Activated B cell treated with CpG ODN at 0.5 μM for 24 hours (primary cell): ENCODE measurements at regions of chr3 and their contacts with region 1.

Region 1: DNA sequence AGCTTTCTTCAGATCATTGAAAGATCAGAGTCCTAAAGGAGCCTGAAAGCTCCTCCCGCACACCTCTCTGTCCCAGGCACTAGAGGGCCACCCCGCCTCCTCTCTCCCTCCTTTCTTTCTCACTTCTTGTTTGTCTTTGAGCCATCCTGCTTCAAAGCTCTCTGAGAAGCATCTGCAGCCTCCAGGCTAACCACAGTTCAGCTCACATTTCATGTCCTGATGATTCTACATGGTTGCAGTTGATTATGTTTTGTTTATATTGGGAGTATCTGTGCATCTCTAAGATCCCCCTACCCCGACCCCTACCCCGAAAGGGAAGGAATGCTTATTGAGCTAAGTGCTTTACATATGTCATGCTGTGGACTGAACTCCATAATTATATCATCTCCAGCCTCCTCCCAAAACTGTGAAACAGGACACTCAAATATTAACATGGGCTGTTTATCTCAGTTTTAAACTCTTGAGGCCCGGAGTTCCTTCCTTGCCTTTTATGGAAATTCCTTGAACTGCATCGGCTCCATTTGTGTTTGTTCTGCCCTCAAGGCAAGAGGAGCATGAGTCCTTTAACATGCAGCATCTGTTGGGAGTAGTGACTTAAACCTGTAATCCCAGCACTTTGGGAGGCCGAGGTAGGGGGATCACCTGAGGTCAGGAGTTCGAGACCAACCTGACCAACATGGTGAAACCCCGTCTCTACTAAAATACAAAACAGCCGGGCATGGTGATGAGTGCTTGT is 30.9 kb downstream of the MGLL start:
- DNase-seq: no peak
- ATAC-seq: peak; percentile 83
- H3K4me3 Mint-ChIP-seq: no peak overlapping the region
- H3K27ac Mint-ChIP-seq: no peak overlapping the region
- H3K4me1 Mint-ChIP-seq: peaks cover 9% of the 10 kb centered on the region
- H3K27me3 Mint-ChIP-seq: no peaks in the 10 kb centered on the region
- CTCF ChIP-seq: no peak

Region 2: DNA sequence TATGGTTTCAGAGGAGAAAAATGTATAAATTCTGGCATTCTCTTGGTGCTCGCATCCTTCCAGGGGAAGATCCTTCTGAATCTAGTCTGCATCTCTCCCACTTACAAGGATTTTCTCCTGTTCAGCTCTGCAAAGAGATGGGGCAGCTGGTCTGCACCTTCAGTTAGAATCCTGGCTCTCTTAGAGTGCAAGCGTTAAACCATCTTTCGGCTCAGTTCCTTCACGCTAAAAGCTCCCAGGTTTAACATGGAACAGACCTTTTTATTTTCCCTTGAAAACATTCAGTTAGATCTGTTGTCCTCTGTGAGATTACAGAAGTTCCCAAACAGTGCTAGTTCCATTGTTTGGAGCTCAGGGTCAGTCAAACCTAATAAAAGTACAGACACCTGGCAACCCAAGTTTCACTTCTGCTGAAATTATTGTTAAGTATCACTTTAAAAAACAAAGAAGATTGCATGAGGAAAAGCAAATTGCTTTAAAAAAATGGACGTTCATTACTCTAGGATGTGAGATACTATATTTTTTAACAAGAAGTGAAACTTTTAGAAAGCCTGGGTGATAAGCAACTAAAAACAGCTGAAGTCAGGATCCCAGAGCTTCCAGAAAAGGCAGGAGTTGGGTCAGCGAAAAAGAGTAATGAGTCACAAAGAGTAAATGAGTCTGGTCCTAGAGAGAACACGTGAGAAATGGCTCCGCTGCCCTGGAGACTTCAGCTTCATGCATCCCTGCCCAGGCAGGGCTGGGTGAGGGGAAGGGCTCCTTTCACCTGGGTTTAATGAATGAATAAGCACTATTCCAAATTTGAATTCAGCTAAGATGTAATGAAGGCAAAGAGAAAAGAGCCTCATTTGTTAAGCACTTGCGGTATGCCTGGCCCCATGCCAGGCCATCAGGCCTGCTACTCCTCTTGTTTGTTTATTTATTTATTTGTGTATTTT is 55.3 kb before region 1 on chr3:
- CTCF ChIA-PET with region 1: no interaction called
- POLR2A ChIA-PET with region 1: no interaction called
- intact Hi-C with region 1: loop called (anchors 5 kb)
- DNase-seq: no peak
- ATAC-seq: peak; percentile 91
- H3K4me3 Mint-ChIP-seq: peak overlapping the region; percentile 77
- H3K27ac Mint-ChIP-seq: peak overlapping the region; percentile 93
- H3K4me1 Mint-ChIP-seq: peaks cover 46% of the 10 kb centered on the region
- H3K27me3 Mint-ChIP-seq: no peaks in the 10 kb centered on the region
- CTCF ChIP-seq: no peak

Region 3: GRCh38 chr3:127822698-127823425 is 31.5 kb after region 1 on chr3:
- CTCF ChIA-PET with region 1: interaction called, 5 read pairs
- POLR2A ChIA-PET with region 1: no interaction called
- intact Hi-C with region 1: loop called (anchors 5 kb)
- DNase-seq: peak; percentile 39
- ATAC-seq: peak; percentile 72
- H3K4me3 Mint-ChIP-seq: peak overlapping the region; percentile 93
- H3K27ac Mint-ChIP-seq: peak overlapping the region; percentile 74
- H3K4me1 Mint-ChIP-seq: peaks cover 29% of the 10 kb centered on the region
- H3K27me3 Mint-ChIP-seq: peaks cover 14% of the 10 kb centered on the region
- CTCF ChIP-seq: no peak

Region 4: GRCh38 chr3:127857333-127857732 is 66.0 kb after region 1 on chr3:
- CTCF ChIA-PET with region 1: interaction called, 4 read pairs
- POLR2A ChIA-PET with region 1: no interaction called
- intact Hi-C with region 1: loop called (anchors 1 kb)
- DNase-seq: no peak
- ATAC-seq: peak; percentile 64
- H3K4me3 Mint-ChIP-seq: no peak overlapping the region
- H3K27ac Mint-ChIP-seq: no peak overlapping the region
- H3K4me1 Mint-ChIP-seq: no peaks in the 10 kb centered on the region
- H3K27me3 Mint-ChIP-seq: no peaks in the 10 kb centered on the region
- CTCF ChIP-seq: no peak

Region 5: DNA sequence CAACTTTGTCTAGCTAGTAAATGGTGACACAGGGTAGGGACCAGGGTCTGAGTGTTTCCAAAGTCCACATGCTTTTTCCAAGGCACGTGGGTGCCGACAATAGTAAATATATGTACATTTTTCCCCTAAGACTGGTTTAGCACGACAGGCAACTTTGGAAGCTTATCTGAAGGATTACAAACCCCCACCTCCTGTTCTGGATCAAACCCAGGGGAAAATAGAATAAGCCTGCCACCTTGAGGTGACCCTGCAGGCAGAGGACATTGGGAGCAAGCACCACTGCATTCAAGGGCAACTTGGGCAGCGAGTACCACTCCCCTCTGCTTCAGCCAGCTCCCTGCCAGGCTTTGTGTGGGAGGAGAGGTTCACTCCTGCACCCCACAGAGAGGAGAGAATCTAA is 168.5 kb after region 1 on chr3:
- CTCF ChIA-PET with region 1: interaction called, 10 read pairs
- POLR2A ChIA-PET with region 1: no interaction called
- intact Hi-C with region 1: no loop called
- DNase-seq: no peak
- ATAC-seq: no peak
- H3K4me3 Mint-ChIP-seq: no peak overlapping the region
- H3K27ac Mint-ChIP-seq: no peak overlapping the region
- H3K4me1 Mint-ChIP-seq: no peaks in the 10 kb centered on the region
- H3K27me3 Mint-ChIP-seq: no peaks in the 10 kb centered on the region
- CTCF ChIP-seq: no peak

Region 6: DNA sequence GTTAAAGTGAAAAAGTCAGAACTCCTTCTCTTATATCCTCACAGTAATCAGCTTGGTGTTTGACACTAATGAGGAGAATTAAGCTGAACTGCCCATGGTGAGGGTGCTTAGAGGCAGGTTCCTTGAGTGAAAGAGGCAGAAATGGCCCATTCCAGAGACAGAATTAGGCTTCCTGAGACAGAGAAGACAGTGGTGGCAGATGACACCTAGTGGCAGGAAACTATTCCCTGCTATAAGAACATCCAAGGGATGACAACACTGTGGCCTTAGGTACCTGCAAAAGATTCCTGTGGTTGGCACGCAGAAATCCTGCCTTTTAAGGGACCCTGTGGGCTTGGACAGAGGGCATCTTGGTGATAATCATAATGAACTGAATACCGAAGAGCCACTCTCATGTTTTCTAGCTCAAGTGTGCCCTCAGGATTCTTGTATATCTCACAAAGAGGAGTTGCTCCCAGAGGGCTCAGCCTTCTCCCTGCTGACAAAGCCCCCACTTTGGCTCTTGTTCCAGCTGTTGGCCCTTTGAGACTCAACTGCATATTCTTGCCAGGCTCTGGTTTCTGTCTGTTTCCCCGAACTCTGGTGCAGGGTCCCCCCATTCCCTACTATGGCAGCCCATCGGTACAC is 179.7 kb after region 1 on chr3:
- CTCF ChIA-PET with region 1: no interaction called
- POLR2A ChIA-PET with region 1: no interaction called
- intact Hi-C with region 1: loop called (anchors 1 kb)
- DNase-seq: no peak
- ATAC-seq: peak; percentile 67
- H3K4me3 Mint-ChIP-seq: no peak overlapping the region
- H3K27ac Mint-ChIP-seq: no peak overlapping the region
- H3K4me1 Mint-ChIP-seq: no peaks in the 10 kb centered on the region
- H3K27me3 Mint-ChIP-seq: peaks cover 5% of the 10 kb centered on the region
- CTCF ChIP-seq: peak; percentile 30